Astrocyte of the cerebellum (primary cell): ENCODE measurements at regions of chr22 and their contacts with region 1.

Region 1: GRCh38 chr22:27260087-27260723 is 541.4 kb downstream of the MN1 start:
- DNase-seq: no peak
- H3K4me3 ChIP-seq: no peak overlapping the region
- CTCF ChIP-seq: no peak

Region 2: DNA sequence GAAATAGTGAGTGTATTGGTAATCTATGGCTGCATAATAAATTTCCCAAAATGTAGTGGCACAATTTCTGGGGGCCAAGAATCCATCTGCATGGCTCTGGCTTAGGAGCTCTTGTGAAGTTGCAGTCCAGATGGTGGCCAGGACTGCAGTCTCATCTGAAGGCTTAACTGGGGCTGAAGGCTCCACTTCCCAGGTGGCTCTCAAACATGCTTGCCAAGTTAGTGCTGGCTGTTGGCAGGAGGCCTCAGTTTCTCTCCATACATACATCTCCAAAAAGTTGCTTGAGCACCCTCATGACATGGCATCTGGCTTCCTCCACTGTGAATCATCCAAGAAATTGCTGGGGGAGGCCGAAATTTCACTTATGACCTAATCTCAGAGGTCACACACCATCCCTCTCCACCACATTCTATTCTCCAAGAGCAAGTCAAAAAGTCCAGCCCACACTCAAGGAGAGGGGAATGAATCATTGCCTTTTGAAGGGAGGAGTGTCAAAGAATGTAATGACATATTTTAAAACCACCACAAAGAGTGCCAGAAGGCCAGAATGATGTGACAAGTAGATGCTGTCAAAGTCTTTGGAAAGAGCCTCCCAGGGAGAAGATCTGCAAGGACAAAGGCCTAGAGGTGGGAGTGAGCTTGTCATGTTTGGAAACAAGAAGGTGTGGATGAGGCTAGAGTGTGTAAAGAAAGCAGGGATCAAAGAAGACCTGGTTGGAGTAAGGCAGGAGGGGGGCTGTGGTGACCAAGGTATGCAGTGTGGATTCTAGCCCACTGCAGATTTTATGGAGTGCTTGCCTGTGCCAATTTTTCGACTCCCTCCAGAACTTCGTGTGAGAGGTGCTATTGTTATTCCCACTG is 36.7 kb before region 1 on chr22:
- in situ Hi-C with region 1: no loop called
- DNase-seq: peak; percentile 81
- H3K4me3 ChIP-seq: no peak overlapping the region
- CTCF ChIP-seq: no peak

Region 3: GRCh38 chr22:27318516-27318915 is 58.3 kb after region 1 on chr22:
- in situ Hi-C with region 1: loop called (anchors 5 kb)
- DNase-seq: peak; percentile 55
- H3K4me3 ChIP-seq: no peak overlapping the region
- CTCF ChIP-seq: no peak